Activated T-helper 1 cell treated with anti-CD3 and anti-CD28 coated beads, Interleukin-12 subunit alpha, Interleukin-12 subunit beta, Interleukin-2, Interleukin-4 antibody, amounts not matched to agents 30 ng/mL and 10 ng/mL and 1 ng/mL, durations not matched to agents 14 hours and 24 hours and 36 hours (primary cell): ENCODE measurements at regions of chr5 and their contacts with region 1.

Region 1: DNA sequence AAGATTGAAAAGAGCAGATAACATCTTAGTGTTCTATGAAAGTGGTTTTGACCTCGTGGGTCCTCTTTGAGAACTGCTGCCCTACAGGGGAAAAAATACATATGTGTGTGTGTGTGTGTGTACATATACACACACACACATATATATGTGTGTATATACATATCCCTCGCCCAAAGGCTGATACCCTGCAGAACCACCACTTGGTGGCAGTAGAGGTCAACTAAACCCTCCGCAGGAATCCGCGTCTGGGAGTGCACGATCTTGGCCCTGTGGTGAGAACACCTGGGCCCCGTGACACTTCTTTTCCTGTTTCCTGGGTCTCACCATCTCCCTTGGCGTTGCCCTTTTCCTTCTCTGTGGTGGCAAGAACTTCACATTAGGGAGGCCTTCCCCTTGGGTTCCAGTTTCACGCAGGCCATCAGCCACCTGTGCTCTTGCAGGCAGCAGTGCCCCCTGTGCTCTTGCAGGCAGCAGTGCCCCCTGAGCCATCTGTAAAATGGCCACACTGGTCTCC is 8.2 kb downstream of the IL9 start:
- DNase-seq: peak; percentile 53
- H3K4me3 Mint-ChIP-seq: no peak overlapping the region
- H3K27ac Mint-ChIP-seq: no peak overlapping the region
- H3K4me1 Mint-ChIP-seq: peaks cover 14% of the 10 kb centered on the region
- H3K27me3 Mint-ChIP-seq: peaks cover 18% of the 10 kb centered on the region

Region 2: GRCh38 chr5:136062366-136063274 is 175.2 kb after region 1 on chr5:
- intact Hi-C with region 1: loop called (anchors 1 kb)
- DNase-seq: no peak
- H3K4me3 Mint-ChIP-seq: no peak overlapping the region
- H3K27ac Mint-ChIP-seq: no peak overlapping the region
- H3K4me1 Mint-ChIP-seq: no peaks in the 10 kb centered on the region
- H3K27me3 Mint-ChIP-seq: peaks cover 2% of the 10 kb centered on the region

Region 3: DNA sequence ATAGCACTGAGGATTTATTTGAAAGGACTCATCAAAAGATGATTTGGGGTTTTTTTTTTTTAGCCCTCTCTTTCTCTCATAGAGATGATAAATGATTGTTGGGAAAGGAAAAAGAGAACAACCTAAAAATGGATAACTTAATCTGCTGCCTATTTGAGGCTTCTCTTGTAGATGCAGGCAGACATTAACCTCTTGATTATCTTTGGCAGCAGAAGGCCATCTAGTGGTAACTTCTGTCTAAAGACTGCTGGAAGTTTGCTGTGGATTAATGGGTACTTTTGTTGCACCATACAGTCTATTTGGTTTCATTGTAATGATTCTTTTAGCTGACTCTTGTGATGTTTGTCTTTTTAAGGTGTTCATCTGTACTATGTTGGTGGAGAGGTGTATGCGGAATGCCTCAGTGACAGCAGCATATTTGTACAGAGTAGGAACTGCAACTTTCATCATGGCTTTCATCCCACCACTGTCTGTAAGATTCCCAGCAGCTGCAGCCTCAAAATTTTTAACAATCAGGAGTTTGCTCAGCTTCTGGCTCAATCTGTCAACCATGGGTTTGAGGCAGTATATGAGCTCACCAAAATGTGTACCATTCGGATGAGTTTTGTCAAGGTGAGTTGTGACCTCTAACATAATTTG is 286.7 kb after region 1 on chr5:
- intact Hi-C with region 1: loop called (anchors 1 kb)
- DNase-seq: no peak
- H3K4me3 Mint-ChIP-seq: no peak overlapping the region
- H3K27ac Mint-ChIP-seq: no peak overlapping the region
- H3K4me1 Mint-ChIP-seq: no peaks in the 10 kb centered on the region
- H3K27me3 Mint-ChIP-seq: no peaks in the 10 kb centered on the region

Region 4: GRCh38 chr5:136212252-136212721 is 324.9 kb after region 1 on chr5:
- intact Hi-C with region 1: loop called (anchors 1 kb)
- DNase-seq: peak; percentile 8
- H3K4me3 Mint-ChIP-seq: no peak overlapping the region
- H3K27ac Mint-ChIP-seq: no peak overlapping the region
- H3K4me1 Mint-ChIP-seq: no peaks in the 10 kb centered on the region
- H3K27me3 Mint-ChIP-seq: peaks cover 3% of the 10 kb centered on the region

Region 5: DNA sequence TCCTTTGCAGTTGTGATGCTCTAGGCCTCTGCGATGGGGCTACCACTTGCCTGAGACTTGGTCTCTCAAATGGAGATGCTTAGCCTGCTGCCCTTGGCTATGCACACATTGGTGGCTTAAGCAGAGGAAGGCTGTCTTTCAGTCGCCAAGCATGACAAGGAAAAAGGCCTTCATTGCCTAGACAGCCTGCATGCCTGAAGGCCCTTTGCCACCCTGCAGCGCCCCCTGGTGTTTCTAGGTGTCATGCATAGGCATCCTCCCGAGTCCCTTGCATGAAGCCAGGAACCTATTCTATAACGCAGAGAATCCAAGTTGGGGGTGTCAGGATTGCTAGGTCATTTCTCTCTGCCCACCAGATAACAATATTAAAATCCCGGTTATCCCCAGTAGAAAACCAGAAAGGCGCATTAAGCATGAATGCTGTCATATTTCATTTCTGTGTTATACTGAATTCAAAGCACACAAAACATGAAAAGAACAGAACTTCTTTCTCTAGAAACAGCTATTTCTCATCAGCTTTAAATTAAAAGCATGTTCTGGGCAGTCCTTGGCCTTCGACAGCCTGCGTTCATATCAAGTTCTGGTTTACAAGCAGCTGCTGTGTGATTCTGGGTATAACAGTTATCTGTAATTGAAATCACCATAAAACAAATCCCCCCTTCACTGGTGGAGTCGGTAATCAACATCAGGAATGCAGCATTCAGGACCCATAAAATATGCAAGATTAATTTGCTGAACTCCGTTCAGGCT is 537.6 kb after region 1 on chr5:
- intact Hi-C with region 1: loop called (anchors 5 kb)
- DNase-seq: peak; percentile 21
- H3K4me3 Mint-ChIP-seq: no peak overlapping the region
- H3K27ac Mint-ChIP-seq: no peak overlapping the region
- H3K4me1 Mint-ChIP-seq: no peaks in the 10 kb centered on the region
- H3K27me3 Mint-ChIP-seq: no peaks in the 10 kb centered on the region